Activated T-helper 1 cell treated with anti-CD3 and anti-CD28 coated beads, Interleukin-12 subunit alpha, Interleukin-12 subunit beta, Interleukin-2, Interleukin-4 antibody, amounts not matched to agents 30 ng/mL and 10 ng/mL and 1 ng/mL, durations not matched to agents 14 hours and 24 hours and 36 hours (primary cell): ENCODE measurements at regions of chr5 and their contacts with region 1.

Region 1: GRCh38 chr5:137935190-137935589 is 45.9 kb downstream of the PKD2L2 start:
- DNase-seq: no peak
- H3K4me3 Mint-ChIP-seq: no peak overlapping the region
- H3K27ac Mint-ChIP-seq: no peak overlapping the region
- H3K4me1 Mint-ChIP-seq: peaks cover 8% of the 10 kb centered on the region
- H3K27me3 Mint-ChIP-seq: no peaks in the 10 kb centered on the region

Region 2: DNA sequence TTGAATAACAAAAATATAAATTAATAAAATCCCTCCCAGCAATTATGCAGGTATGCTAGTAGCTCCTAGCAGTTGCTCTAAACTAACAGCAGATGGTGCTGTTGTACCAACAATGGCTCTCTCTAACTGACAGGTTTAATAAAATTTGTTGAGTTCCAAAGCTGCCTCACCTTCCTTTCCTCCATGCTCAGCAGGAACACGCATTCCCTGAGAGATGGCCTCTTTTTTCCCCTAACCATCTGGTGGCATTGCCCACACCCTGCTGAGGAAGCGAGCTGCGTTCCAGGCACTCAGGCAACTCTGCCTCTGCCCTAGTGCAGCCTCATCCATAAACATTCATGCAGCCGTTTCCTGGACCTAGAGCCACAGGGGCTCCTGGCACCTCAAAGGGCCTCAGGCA is 305.5 kb before region 1 on chr5:
- intact Hi-C with region 1: no loop called
- DNase-seq: no peak
- H3K4me3 Mint-ChIP-seq: no peak overlapping the region
- H3K27ac Mint-ChIP-seq: no peak overlapping the region
- H3K4me1 Mint-ChIP-seq: no peaks in the 10 kb centered on the region
- H3K27me3 Mint-ChIP-seq: no peaks in the 10 kb centered on the region

Region 3: GRCh38 chr5:137858223-137858916 is 76.8 kb before region 1 on chr5:
- intact Hi-C with region 1: no loop called
- DNase-seq: no peak
- H3K4me3 Mint-ChIP-seq: no peak overlapping the region
- H3K27ac Mint-ChIP-seq: no peak overlapping the region
- H3K4me1 Mint-ChIP-seq: peaks cover 16% of the 10 kb centered on the region
- H3K27me3 Mint-ChIP-seq: peaks cover 6% of the 10 kb centered on the region

Region 4: GRCh38 chr5:137888857-137889759 is 46.1 kb before region 1 on chr5 and contains the start of gene PKD2L2:
- intact Hi-C with region 1: loop called (anchors 5 kb)
- DNase-seq: peak; percentile 82
- H3K4me3 Mint-ChIP-seq: peak within 1 kb of the TSS; percentile 84
- H3K27ac Mint-ChIP-seq: peak within 1 kb of the TSS; percentile 89
- H3K4me1 Mint-ChIP-seq: peaks cover 24% of the 10 kb centered on the region
- H3K27me3 Mint-ChIP-seq: peaks cover 2% of the 10 kb centered on the region
- total RNA-seq, gene PKD2L2: not detected in 2 replicates

Region 5: GRCh38 chr5:137997726-137998213 is 62.6 kb after region 1 on chr5:
- intact Hi-C with region 1: loop called (anchors 2 kb)
- DNase-seq: no peak
- H3K4me3 Mint-ChIP-seq: no peak overlapping the region
- H3K27ac Mint-ChIP-seq: peak overlapping the region; percentile 79
- H3K4me1 Mint-ChIP-seq: peaks cover 47% of the 10 kb centered on the region
- H3K27me3 Mint-ChIP-seq: no peaks in the 10 kb centered on the region